ENCODE measurements at regions of chr4 and their contacts with region 1.

Region 1: GRCh38 chr4:151362404-151363164 is 37.2 kb upstream of the SH3D19 start:
- DNase-seq: peak; percentile 87
- H3K4me3 ChIP-seq: no peak overlapping the region
- H3K27ac ChIP-seq: no peak overlapping the region
- H3K4me1 ChIP-seq: no peaks in the 10 kb centered on the region
- H3K27me3 ChIP-seq: no peaks in the 10 kb centered on the region
- CTCF ChIP-seq: peak; percentile 77 to 94 (median 90)
- POLR2A ChIP-seq: no peak

Region 2: GRCh38 chr4:151117371-151117962 is 245.1 kb before region 1 on chr4:
- intact Hi-C with region 1: loop called (anchors 5 kb)
- DNase-seq: no peak
- H3K4me3 ChIP-seq: no peak overlapping the region
- H3K27ac ChIP-seq: no peak overlapping the region
- H3K4me1 ChIP-seq: peaks cover 0 to 9% (median 4%) of the 10 kb centered on the region in 6 donors
- H3K27me3 ChIP-seq: no peaks in the 10 kb centered on the region
- CTCF ChIP-seq: peak; percentile 25 to 76 (median 61)
- POLR2A ChIP-seq: no peak

Region 3: DNA sequence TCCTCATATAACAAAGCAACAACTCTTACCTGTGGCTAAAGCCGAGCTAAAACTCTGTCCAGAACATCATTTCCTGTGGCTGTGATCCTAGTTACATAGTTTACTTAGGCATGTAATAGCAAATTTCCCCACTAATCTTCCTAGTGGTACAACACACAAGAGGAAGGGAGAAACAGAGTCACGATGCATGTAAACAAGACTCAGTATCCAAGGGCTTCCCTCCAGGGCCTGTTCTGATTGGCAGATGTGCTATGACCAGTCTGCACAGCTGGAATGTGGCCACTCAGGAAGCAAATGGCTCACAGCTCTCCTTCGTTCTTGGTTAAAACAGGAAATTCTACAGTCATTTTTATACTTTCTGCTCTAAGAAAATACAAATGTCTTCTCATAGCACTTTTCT is 134.9 kb before region 1 on chr4:
- intact Hi-C with region 1: no loop called
- DNase-seq: no peak
- H3K4me3 ChIP-seq: peak overlapping the region in 4 of 8 donors; percentile 0 to 34 (median 14)
- H3K27ac ChIP-seq: peak overlapping the region in 6 of 8 donors; percentile 7 to 45 (median 42)
- H3K4me1 ChIP-seq: no peaks in the 10 kb centered on the region
- H3K27me3 ChIP-seq: peaks cover 0 to 3% (median 0%) of the 10 kb centered on the region in 7 donors
- CTCF ChIP-seq: no peak
- POLR2A ChIP-seq: no peak

Region 4: DNA sequence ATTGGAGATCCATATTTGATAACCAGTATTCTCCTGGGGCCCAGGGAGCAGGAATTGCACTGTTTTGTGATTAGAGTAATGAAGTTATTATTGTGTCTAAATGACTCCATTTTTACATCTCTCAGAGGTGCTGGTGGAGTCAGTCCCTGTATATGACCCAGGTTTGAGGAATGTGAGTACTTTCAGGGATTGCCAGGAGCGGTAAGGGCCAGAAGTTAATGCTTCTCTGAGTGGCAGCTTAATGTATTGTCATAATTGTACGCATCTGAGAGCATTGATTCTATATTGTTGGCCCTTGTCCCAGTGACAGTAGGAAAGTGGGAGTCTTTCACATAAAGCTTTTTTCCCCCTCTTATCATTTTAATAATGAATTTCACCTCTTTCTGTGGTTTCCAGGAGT is 252.0 kb after region 1 on chr4:
- intact Hi-C with region 1: loop called (anchors 10 kb)
- DNase-seq: no peak
- H3K4me3 ChIP-seq: no peak overlapping the region
- H3K27ac ChIP-seq: no peak overlapping the region
- H3K4me1 ChIP-seq: no peaks in the 10 kb centered on the region
- H3K27me3 ChIP-seq: no peaks in the 10 kb centered on the region
- CTCF ChIP-seq: no peak
- POLR2A ChIP-seq: no peak

Measured in spleen (tissue), 13 donors.